Gastrocnemius medialis (tissue), 4 donors: ENCODE measurements at regions of chr14 and their contacts with region 1.

Region 1: GRCh38 chr14:81406863-81407262 is 6.7 kb upstream of the STON2 start:
- DNase-seq: peak; percentile 90 to 92
- ATAC-seq: peak; percentile 93 to 97
- H3K4me3 ChIP-seq: no peak overlapping the region
- H3K27ac ChIP-seq: peak overlapping the region; percentile 78 to 84 (median 83)
- H3K4me1 ChIP-seq: peaks cover 45 to 47% of the 10 kb centered on the region in 2 donors
- H3K27me3 ChIP-seq: no peaks in the 10 kb centered on the region
- CTCF ChIP-seq: no peak
- POLR2A ChIP-seq: peak in 1 of 2 donors; percentile 19

Region 2: GRCh38 chr14:81436296-81437138 is 29.7 kb after region 1 on chr14:
- in situ Hi-C with region 1: loop called in 1 of 4 experiments (anchors 5 kb)
- intact Hi-C with region 1: loop called (anchors 5 kb)
- DNase-seq: peak; percentile 62 to 73
- ATAC-seq: peak; percentile 85 to 88
- H3K4me3 ChIP-seq: peak overlapping the region; percentile 78 to 93 (median 82)
- H3K27ac ChIP-seq: peak overlapping the region; percentile 80 to 87 (median 84)
- H3K4me1 ChIP-seq: peaks cover 20 to 24% of the 10 kb centered on the region in 2 donors
- H3K27me3 ChIP-seq: no peaks in the 10 kb centered on the region
- CTCF ChIP-seq: no peak
- POLR2A ChIP-seq: peak; percentile 83 to 91

Region 3: GRCh38 chr14:81837304-81837703 is 430.4 kb after region 1 on chr14:
- in situ Hi-C with region 1: no loop called
- intact Hi-C with region 1: no loop called
- DNase-seq: no peak
- ATAC-seq: no peak
- H3K4me3 ChIP-seq: no peak overlapping the region
- H3K27ac ChIP-seq: no peak overlapping the region
- H3K4me1 ChIP-seq: no peaks in the 10 kb centered on the region
- H3K27me3 ChIP-seq: no peaks in the 10 kb centered on the region
- CTCF ChIP-seq: no peak
- POLR2A ChIP-seq: no peak